ENCODE measurements at regions of chr19 and their contacts with region 1.

Region 1: GRCh38 chr19:55117636-55118391 is at the start of gene PPP1R12C:
- DNase-seq: peak; percentile 99
- ATAC-seq: peak; percentile 95
- H3K4me3 Mint-ChIP-seq: peak within 1 kb of the TSS; percentile 97
- H3K27ac Mint-ChIP-seq: peak within 1 kb of the TSS; percentile 96
- H3K4me1 Mint-ChIP-seq: peaks cover 36% of the 10 kb centered on the region
- H3K27me3 Mint-ChIP-seq: peaks cover 5% of the 10 kb centered on the region
- total RNA-seq, gene PPP1R12C: 134 to 144 TPM

Region 2: DNA sequence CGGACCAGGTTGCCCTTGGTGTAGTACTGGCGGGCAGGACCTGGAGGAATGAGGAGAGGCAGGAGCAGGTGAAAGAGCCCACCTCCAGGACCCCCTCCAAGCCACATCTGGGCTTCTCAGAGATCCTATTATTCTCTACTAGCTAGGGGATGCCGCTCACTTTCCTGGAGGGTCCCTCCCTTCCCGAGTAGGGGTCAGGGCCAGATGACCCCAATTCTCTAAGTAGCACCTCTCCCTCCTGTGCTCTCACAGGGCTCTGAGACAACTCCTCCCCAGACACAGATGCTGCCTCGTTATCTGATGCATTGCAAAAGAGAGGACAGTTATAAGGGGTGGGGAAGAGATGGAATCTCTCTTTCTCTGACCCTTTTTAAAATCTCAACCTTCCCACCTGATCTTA is 102.7 kb before region 1 on chr19:
- CTCF ChIA-PET with region 1: no interaction called
- DNase-seq: no peak
- ATAC-seq: peak; percentile 14
- H3K4me3 Mint-ChIP-seq: no peak overlapping the region
- H3K27ac Mint-ChIP-seq: no peak overlapping the region
- H3K4me1 Mint-ChIP-seq: no peaks in the 10 kb centered on the region
- H3K27me3 Mint-ChIP-seq: no peaks in the 10 kb centered on the region

Region 3: GRCh38 chr19:55044673-55045443 is 73.0 kb before region 1 on chr19:
- CTCF ChIA-PET with region 1: no interaction called
- DNase-seq: no peak
- ATAC-seq: no peak
- H3K4me3 Mint-ChIP-seq: no peak overlapping the region
- H3K27ac Mint-ChIP-seq: no peak overlapping the region
- H3K4me1 Mint-ChIP-seq: peaks cover 20% of the 10 kb centered on the region
- H3K27me3 Mint-ChIP-seq: no peaks in the 10 kb centered on the region

Region 4: DNA sequence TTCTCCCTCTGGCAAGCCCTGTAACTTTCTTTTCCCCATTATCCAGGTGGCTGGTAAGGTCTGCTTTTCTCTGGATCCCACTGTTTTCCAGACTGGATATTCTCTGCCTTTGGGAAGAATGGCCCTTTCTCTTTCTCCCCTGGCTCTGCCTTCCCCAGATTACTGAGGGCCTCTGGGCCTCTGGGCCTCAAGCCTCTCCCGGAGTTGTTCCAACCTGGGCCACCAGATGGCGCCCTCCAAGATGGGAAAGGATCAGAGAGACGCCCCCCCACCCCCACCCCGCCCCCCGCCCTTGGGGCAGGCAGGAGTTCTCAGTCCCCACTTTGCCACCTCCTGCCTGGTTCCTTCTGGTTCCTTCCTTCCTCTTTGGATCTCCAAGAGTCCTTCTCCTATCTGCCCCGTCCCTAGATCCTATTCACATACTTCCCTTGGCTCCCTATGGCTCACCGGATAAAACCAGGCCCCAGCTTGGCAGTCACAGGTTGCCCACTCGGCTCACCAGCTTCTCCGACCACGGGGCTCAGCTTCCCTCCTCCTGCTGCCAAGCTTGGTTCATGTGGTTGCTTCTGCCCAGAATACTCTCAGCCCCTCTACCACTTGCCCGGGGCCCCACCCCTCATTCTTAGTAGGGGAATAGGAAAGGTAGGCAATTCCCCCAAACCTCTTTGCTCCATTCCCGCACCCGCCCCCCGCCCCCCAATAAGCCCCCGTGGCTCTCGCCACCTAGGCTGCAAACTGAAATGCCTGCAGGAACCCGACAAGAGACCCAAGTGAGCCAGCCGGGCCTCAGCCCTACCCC is 29.1 kb before region 1 on chr19:
- CTCF ChIA-PET with region 1: interaction called, 17 read pairs
- DNase-seq: peak; percentile 84
- ATAC-seq: no peak
- H3K4me3 Mint-ChIP-seq: no peak overlapping the region
- H3K27ac Mint-ChIP-seq: no peak overlapping the region
- H3K4me1 Mint-ChIP-seq: peaks cover 16% of the 10 kb centered on the region
- H3K27me3 Mint-ChIP-seq: peaks cover 42% of the 10 kb centered on the region